ENCODE measurements at regions of chr9 and their contacts with region 1.

Region 1: DNA sequence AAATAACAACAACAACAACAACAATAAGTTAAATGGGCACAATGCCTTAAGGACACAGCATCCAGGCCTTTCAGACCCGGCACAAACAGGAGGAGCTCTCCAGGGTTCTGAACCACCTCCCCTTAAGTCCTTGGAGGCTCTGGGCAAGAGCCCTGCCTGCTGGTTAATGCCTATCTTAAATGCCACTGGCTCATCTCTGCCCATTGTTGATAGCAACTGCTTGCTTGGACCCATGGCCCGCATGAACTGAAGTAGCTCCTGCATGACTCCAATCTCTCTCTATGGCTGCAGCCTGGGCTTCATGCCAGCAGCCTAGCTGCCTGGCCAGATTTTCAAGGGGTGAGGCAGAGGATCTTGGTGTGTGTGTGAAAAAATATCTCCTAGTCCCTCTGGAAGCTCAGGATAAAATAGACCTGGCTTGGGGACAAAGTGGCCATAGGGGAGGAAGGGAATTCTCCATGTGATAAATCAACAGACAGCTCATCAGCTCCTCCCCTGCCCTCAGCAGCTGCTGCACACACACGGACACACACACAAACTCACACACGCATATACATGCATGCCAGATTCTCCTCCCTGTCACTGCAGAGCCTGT is 27.4 kb downstream of the FAM219A start:
- DNase-seq: no peak
- ATAC-seq: peak; percentile 50; the same call in 1 of the 2 replicates
- H3K4me3 ChIP-seq: no peak overlapping the region
- H3K27ac ChIP-seq: no peak overlapping the region
- H3K4me1 ChIP-seq: no peaks in the 10 kb centered on the region; the same call in 1 of the 2 replicates
- H3K27me3 ChIP-seq: no peaks in the 10 kb centered on the region
- CTCF ChIP-seq: no peak

Region 2: DNA sequence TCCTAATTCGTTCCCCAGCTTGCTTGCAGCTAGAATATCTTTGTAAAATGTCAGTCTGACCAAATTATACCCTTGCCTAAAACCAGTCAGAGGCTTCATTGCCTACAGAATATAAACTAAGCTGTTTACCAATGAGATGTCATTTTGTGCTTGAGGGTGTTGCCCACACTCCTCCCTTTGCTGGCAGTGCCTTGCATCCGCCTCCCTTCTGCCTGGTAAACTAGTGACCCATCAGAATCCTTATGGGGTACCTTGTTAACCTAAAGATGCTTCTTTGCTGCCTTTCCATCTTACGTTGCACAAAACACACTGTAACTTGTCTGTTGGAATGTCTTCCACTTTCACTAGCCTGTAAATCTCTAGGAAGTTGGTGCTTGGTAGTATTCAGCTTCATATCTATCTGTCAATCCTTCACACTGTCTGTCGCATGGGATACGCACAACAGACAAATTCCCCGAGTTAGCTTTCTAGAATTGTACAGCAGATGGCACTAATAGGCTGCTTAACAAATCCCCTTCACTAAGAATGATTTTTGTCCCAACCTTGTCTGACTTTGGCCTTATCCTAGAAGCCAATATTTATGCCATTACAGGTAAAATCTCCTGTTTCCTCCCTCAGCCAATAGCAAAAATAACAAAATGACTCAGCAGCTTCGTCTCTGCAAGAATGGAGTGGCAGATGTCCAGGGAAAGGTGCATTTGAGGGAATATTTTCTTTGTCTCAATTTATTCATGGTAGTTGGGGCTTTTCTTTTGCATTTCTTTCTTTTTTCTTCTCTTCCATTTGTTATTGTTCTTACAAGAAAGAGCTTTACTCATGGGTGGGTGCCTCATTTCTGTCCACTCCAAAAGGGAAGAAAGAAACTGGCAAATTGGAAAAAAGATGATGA is 98.6 kb before region 1 on chr9:
- CTCF ChIA-PET with region 1: interaction called, 15 read pairs
- POLR2A ChIA-PET with region 1: no interaction called
- in situ Hi-C with region 1: no loop called
- intact Hi-C with region 1: no loop called
- DNase-seq: peak; percentile 30
- ATAC-seq: no peak
- H3K4me3 ChIP-seq: no peak overlapping the region
- H3K27ac ChIP-seq: no peak overlapping the region
- H3K4me1 ChIP-seq: peaks cover 24% of the 10 kb centered on the region
- H3K27me3 ChIP-seq: no peaks in the 10 kb centered on the region
- CTCF ChIP-seq: peak; percentile 75

Region 3: GRCh38 chr9:34396276-34397214 is 34.4 kb before region 1 on chr9:
- CTCF ChIA-PET with region 1: interaction called, 11 read pairs
- POLR2A ChIA-PET with region 1: no interaction called
- in situ Hi-C with region 1: no loop called
- intact Hi-C with region 1: no loop called
- DNase-seq: no peak
- ATAC-seq: no peak
- H3K4me3 ChIP-seq: no peak overlapping the region
- H3K27ac ChIP-seq: no peak overlapping the region
- H3K4me1 ChIP-seq: no peaks in the 10 kb centered on the region
- H3K27me3 ChIP-seq: no peaks in the 10 kb centered on the region
- CTCF ChIP-seq: no peak

Region 4: DNA sequence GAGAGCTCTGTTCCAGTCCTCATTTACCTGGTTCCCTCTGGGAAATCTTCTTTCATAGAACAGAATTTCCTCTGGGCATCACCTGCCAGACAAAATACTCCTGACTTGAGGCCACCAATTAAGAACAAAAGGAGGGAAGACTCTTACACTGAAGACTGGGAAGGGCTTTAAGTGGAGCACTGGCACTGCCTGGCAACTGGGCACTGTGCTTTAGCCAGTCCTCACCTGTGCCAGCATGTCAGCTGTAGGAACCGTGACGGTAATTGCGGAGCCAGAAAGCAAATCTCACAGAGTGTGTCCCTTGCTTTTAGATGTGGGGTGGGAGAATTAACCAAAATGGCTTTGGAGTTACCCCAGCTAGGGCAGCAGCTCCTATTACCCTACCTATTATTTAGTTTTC is 13.2 kb before region 1 on chr9:
- CTCF ChIA-PET with region 1: no interaction called
- POLR2A ChIA-PET with region 1: interaction called, 12 read pairs
- in situ Hi-C with region 1: no loop called
- intact Hi-C with region 1: no loop called
- DNase-seq: no peak
- ATAC-seq: no peak
- H3K4me3 ChIP-seq: no peak overlapping the region
- H3K27ac ChIP-seq: no peak overlapping the region
- H3K4me1 ChIP-seq: no peaks in the 10 kb centered on the region
- H3K27me3 ChIP-seq: no peaks in the 10 kb centered on the region
- CTCF ChIP-seq: no peak